ENCODE measurements at regions of chr20 and their contacts with region 1.

Region 1: DNA sequence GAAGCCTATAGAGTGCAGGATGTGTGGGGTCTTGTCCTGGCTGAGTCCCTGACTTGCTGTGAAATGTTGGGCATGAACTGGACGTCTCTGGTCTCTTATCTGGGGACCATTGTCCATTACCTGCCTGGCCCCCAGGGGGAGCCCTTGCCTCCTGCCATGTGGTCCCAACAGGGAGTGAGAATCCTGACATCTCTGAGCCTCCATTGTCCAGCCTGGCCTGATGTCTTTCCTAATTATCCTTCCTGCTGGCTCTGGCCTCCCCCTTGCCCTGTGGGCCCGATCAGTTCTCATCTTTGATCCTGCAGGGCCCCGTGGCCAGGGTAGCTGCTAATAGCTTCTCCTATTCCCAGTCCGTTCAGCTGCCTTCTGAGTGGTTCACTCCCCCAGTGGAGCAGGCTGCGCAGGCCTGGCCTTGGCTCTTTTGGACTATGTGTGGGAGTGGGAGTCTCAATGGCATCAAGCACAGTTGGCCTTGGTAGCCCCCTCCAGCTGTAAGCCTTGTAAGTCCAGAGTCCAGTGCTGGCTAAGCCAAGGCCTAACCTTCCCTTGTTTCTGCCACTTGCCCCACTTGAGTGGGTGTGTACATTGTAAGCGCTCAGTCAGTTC is 77.9 kb upstream of the RALY start:
- DNase-seq: peak in 1 of 2 experiments; percentile 24
- H3K4me3 ChIP-seq: no peak overlapping the region
- H3K27ac ChIP-seq: no peak overlapping the region
- H3K4me1 ChIP-seq: peaks cover 17% of the 10 kb centered on the region
- H3K27me3 ChIP-seq: no peaks in the 10 kb centered on the region
- CTCF ChIP-seq: peak; percentile 62

Region 2: DNA sequence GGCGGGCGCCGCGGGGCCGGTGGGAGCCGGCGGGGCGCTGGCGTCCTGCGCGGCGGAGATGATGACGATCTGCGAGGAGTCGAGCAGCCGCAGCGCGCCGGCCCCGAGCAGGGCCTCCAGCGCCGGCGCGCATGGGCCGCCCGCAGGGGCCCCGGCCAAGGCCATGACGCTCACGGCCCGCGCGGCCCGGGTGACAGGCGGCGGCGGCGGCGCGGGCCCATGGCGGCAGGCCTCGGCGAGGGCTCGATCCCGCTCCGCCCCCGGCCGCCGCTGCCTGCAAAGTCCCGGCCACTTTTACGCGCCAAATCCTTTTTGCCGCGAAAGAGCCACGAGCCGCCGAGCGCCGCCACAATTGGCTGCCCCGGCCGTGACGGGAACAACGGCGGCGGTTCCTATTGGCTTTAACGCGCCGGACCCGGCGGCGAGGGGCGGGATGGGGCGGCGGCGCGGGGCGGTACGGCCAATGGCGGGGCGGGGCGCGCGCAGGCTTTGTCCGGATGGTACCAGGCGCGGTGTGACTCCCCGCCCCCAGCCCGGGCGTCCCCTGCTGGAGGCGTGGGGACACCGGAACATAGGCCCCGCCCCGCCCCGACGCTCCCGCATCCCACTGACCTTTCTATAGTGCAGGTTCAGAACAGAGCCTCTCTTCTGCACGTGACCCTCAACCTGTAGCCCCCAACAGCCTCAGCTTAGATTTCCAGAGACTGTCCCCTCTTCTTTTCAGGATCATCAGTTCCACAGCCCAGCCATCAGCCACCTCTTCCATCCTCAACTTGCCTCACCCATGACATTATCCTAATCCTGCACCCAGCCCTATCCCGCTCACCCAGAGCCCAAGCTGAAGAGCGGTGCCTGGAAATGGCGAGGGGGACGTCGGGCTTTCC is 229.5 kb before region 1 on chr20 and contains the start of gene E2F1:
- CTCF ChIA-PET with region 1: no interaction called
- POLR2A ChIA-PET with region 1: interaction called, 14 read pairs
- intact Hi-C with region 1: no loop called
- DNase-seq: peak; percentile 82 to 99
- H3K4me3 ChIP-seq: peak within 1 kb of the TSS; percentile 73
- H3K27ac ChIP-seq: no peak within 1 kb of the TSS
- H3K4me1 ChIP-seq: peaks cover 33% of the 10 kb centered on the region
- H3K27me3 ChIP-seq: no peaks in the 10 kb centered on the region
- CTCF ChIP-seq: 0 out of 2 replicates have a peak, but pooled peaks have one; percentile 25
- total RNA-seq, gene E2F1: 31.5 and 31.6 TPM in 2 replicates

Region 3: GRCh38 chr20:33719989-33720709 is 195.7 kb before region 1 on chr20 and contains the start of gene PXMP4:
- CTCF ChIA-PET with region 1: no interaction called
- POLR2A ChIA-PET with region 1: interaction called, 43 read pairs
- intact Hi-C with region 1: no loop called
- DNase-seq: peak; percentile 88 to 91
- H3K4me3 ChIP-seq: peak within 1 kb of the TSS; percentile 68
- H3K27ac ChIP-seq: no peak within 1 kb of the TSS
- H3K4me1 ChIP-seq: peaks cover 32% of the 10 kb centered on the region
- H3K27me3 ChIP-seq: no peaks in the 10 kb centered on the region
- CTCF ChIP-seq: no peak
- total RNA-seq, gene PXMP4: 12.2 and 19.1 TPM in 2 replicates

Region 4: DNA sequence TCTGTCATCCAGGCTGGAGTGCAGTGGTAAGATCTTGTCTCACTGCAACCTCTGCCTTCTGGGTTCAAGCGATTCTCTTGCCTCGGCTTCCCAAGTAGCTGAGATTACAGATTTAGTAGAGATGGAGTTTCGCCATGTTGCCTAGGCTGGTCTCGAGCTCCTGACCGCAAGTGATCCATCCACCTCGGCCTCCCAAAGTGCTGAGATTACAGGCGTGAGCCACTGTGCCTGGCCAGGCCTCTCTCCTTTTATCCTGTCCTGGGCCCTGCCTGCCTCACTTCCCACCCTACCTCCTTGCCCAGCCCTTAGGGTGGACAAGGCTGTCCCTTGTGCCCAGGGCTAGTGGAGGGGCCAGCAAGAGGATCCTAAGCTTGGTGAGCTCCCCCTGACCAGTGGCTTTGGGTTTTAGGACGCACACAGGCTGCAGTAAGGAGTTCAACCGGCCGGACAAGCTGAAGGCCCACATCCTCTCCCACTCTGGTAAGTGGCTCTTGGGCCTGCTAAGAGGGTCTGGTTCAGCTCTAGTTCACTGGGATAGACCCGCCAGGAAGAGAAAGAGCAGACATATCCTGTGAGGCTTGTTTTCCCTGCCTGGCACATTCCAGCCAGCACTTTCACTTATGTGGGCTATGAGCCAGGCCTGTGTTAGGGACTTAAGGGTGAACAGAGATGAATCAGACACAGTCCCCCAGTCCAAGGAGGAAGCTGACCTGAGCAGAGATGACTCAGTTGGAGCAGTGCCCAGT is 126.5 kb before region 1 on chr20:
- CTCF ChIA-PET with region 1: no interaction called
- POLR2A ChIA-PET with region 1: no interaction called
- intact Hi-C with region 1: no loop called
- DNase-seq: peak; percentile 98 to 100
- H3K4me3 ChIP-seq: peak overlapping the region; percentile 24; the same call in 1 of the 2 replicates
- H3K27ac ChIP-seq: peak overlapping the region; percentile 98
- H3K4me1 ChIP-seq: peaks cover 59% of the 10 kb centered on the region
- H3K27me3 ChIP-seq: no peaks in the 10 kb centered on the region
- CTCF ChIP-seq: no peak

Region 5: GRCh38 chr20:33862709-33863403 is 53.0 kb before region 1 on chr20:
- CTCF ChIA-PET with region 1: interaction called, 13 read pairs
- POLR2A ChIA-PET with region 1: no interaction called
- intact Hi-C with region 1: no loop called
- DNase-seq: peak in 1 of 2 experiments; percentile 21
- H3K4me3 ChIP-seq: no peak overlapping the region
- H3K27ac ChIP-seq: no peak overlapping the region
- H3K4me1 ChIP-seq: peaks cover 22% of the 10 kb centered on the region
- H3K27me3 ChIP-seq: no peaks in the 10 kb centered on the region
- CTCF ChIP-seq: peak; percentile 58

Region 6: GRCh38 chr20:33971147-33971975 is 55.5 kb after region 1 on chr20:
- CTCF ChIA-PET with region 1: no interaction called
- POLR2A ChIA-PET with region 1: no interaction called
- intact Hi-C with region 1: no loop called
- DNase-seq: no peak
- H3K4me3 ChIP-seq: no peak overlapping the region
- H3K27ac ChIP-seq: no peak overlapping the region
- H3K4me1 ChIP-seq: no peaks in the 10 kb centered on the region
- H3K27me3 ChIP-seq: no peaks in the 10 kb centered on the region
- CTCF ChIP-seq: no peak

Measured in PC-9 (cell line).